Ascending aorta (tissue), 2 donors: ENCODE measurements at regions of chr3 and their contacts with region 1.

Region 1: GRCh38 chr3:115658337-115659181 is 35.2 kb downstream of the GAP43 start:
- DNase-seq: peak; percentile 29 to 91
- H3K4me3 ChIP-seq: peak overlapping the region; percentile 57 to 88
- H3K27ac ChIP-seq: peak overlapping the region; percentile 95 to 96
- H3K4me1 ChIP-seq: peaks cover 3 to 12% of the 10 kb centered on the region in 2 donors
- H3K27me3 ChIP-seq: no peaks in the 10 kb centered on the region
- CTCF ChIP-seq: no peak

Region 2: DNA sequence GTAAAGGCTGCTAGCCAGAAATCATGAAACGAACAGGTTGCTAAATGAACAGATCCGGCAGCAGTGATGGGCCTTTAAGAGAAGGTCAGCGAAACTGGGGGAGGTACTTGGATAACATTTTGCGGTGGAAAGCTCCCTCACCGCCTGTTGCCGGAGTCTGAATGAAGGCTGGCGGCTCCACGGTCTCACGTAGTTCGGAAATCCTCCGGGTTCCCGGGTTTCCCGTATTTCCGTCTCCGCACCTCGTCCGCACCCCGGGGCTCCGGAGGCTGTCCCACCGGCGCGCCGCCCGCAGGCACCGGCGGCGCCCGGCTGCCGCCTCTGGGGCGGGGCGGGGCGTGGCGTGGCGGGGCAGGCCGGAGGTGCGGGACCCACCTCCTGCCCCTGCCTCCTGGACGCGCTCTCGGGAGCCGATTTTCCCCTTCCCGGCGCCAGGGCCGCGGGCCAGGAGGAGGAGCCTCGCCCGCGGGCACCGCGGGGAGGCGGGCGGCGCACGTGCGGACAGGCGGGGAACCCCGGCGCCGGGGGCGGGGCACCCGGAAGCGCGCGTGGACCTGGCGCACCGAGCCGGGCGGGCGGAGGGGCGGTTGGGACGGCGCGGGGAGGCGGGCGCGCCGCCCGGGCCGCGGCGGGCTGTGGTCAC is 1711.1 kb before region 1 on chr3 and contains the start of gene ZDHHC23:
- intact Hi-C with region 1: loop called (anchors 5 kb)
- DNase-seq: peak in 1 of 2 donors; percentile 85
- H3K4me3 ChIP-seq: peak within 1 kb of the TSS; percentile 70 to 82
- H3K27ac ChIP-seq: peak within 1 kb of the TSS; percentile 60 to 68
- H3K4me1 ChIP-seq: no peaks in the 10 kb centered on the region
- H3K27me3 ChIP-seq: no peaks in the 10 kb centered on the region
- CTCF ChIP-seq: no peak
- total RNA-seq, gene ZDHHC23: 4.4 TPM

Region 3: DNA sequence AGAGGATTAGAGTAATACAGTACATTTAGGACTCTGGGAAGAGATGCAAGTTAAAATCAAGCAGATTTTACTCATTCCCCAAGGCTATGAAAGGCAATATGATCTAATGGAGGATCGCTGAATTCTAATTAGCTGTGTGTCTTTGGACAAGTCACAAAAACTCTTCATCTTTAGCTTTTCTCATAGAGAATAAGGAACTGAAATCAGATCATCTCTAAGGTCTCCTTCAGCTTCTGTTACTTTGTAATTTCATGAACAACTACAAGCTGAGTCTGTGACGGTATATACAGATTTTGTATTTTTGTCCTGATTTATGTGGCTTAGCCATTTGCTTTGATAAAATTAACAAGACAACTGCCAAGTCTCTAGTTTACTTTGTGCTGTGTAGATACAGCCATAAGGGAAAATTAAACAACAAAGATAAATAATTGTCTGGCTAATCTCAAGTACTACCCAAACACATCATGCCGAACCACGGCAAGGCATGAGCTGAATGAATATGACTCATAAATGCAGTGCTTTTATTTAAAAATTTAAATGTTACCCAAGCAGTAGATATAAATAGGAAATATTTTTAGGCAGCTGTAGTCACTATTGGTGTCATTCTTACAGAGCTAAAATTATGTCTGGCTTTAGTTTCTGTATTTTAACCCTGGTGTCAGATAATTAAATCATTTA is 46.2 kb after region 1 on chr3:
- intact Hi-C with region 1: loop called (anchors 5 kb)
- DNase-seq: no peak
- H3K4me3 ChIP-seq: no peak overlapping the region
- H3K27ac ChIP-seq: peak overlapping the region; percentile 41 to 62
- H3K4me1 ChIP-seq: peaks cover 0 to 5% of the 10 kb centered on the region in 2 donors
- H3K27me3 ChIP-seq: no peaks in the 10 kb centered on the region
- CTCF ChIP-seq: no peak